Sciatic nerve (tissue), 2 donors: ENCODE measurements at regions of chr3 and their contacts with region 1.

Region 1: DNA sequence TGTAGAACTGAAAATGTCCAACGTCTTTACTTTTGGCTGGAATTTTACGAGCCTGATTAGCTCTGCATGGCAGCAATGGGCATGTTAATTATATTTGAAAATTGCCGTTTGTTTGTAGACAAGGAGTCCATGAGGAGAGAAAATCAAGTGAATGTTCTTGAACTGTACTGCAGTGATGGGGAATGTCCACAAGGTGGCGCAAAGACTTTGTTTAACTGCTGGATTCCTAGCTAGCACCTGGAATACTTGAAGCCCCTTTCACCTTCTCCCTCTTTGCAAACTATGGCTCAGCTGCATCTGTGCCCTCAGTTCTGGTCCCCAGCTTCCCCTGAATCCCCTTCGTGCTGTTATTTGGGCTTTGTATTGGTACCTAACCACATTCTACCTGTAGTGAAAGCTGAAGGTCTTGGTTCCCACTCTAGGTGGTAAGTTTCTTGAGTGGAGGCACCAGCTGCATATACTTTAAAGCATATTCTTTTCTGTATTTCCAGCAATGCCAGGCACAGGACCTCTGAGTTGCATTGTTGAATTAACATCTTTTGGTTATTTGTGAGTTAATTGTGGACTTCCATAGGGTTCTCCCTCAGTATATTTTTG is 25.3 kb downstream of the EXOG start:
- DNase-seq: peak; percentile 80
- ATAC-seq: peak; percentile 53

Region 2: DNA sequence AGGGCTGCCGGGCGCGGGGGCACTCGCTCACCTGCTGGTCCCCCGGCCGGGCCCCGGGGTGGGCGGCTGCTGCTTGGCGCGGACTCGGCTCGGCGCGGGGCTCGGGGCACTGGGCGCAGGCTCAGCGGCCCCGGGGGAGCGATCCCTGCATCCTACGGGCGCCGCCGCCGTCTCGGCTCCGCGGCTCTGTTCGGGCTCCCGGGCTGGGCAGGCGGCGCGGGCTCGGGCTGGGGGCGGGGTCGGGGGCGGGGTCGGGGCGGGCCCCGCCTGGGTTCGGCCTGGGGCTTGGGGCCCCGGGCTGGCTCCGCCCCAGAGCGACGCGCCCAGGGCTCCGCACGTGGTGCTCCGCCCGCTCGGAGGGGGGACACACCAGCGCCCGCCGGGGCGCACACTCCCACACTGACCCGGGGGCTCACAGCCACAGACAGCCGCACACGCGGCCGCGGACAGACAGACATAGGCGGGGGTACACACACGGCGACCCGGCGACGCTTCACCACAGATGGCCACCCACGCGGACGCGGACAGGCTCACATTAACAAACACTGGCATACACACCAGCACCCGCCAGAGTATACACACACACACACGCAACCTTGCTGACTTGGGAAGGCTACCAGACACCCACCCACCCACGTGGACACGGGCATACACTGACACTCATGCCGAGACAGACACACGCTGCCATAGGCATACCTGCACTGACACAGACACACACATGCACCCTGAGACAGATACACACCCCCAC is 128.2 kb after region 1 on chr3 and contains the start of gene SCN5A:
- intact Hi-C with region 1: loop called (anchors 10 kb)
- DNase-seq: no peak
- ATAC-seq: peak; percentile 85
- total RNA-seq, gene SCN5A: 2.7 TPM

Region 3: DNA sequence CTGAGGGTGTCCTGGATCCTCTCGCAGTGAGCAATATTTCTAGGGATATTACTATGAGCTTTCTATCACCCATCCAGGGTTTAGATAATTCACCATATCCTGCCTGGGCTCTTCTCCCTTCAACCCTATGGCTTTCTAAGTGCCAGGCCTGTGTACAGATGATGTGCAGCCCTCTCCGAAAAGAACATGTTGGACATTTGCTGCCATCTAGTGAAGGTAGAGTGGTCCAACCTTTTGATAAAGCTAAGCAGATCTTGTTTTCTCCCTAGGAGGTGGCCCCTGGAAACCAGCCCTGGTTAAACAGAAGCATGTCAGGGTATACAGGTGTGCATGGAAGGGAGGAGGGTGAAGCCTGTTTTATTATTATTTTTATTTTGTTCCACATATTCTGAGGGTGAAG is 322.4 kb after region 1 on chr3:
- intact Hi-C with region 1: loop called (anchors 10 kb)
- DNase-seq: no peak
- ATAC-seq: no peak